ENCODE measurements at regions of chr13 and their contacts with region 1.

Region 1: DNA sequence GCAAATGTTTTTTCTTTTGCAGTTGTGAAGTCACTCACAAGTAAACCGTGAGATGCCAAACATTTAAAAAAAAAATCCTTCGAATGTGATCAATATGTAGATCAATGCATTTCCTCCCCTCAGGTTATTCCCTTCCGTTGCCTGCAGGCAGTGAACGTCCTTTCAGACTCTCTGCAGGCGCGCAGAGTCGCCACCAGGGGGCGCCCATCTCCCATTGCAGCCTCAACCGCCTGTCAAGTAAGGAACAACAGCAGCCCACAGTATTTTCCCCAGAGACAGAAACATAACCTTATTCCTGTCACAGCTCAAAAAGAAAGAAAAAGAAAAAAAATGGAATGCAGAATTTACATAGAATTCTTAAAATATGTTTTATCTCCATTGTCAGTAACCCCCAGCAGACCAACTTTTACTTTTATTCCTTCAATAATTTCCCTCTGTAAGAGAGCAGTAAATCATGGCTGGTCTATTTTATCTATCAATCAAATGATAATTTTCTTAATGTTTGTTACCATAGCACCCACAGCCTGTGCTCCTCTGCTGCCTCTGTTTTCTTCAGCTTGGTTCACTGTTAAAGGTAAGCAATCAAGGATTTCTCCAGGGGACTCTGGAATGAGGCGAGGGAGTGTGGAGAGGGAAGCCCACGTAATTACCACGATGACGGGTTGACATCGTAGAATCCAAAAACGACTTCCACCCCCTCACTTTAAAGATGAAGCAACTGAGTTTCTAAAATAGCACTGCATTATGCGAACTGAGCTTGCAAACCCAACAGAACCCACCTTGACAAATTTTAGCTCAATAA is 637.6 kb upstream of the ARGLU1 start:
- DNase-seq: peak; percentile 48 to 79 (median 73)
- ATAC-seq: peak; percentile 59 to 77
- H3K4me3 ChIP-seq: no peak overlapping the region
- H3K27ac ChIP-seq: peak overlapping the region; percentile 12
- H3K4me1 ChIP-seq: peaks cover 3% of the 10 kb centered on the region
- H3K27me3 ChIP-seq: no peaks in the 10 kb centered on the region

Region 2: DNA sequence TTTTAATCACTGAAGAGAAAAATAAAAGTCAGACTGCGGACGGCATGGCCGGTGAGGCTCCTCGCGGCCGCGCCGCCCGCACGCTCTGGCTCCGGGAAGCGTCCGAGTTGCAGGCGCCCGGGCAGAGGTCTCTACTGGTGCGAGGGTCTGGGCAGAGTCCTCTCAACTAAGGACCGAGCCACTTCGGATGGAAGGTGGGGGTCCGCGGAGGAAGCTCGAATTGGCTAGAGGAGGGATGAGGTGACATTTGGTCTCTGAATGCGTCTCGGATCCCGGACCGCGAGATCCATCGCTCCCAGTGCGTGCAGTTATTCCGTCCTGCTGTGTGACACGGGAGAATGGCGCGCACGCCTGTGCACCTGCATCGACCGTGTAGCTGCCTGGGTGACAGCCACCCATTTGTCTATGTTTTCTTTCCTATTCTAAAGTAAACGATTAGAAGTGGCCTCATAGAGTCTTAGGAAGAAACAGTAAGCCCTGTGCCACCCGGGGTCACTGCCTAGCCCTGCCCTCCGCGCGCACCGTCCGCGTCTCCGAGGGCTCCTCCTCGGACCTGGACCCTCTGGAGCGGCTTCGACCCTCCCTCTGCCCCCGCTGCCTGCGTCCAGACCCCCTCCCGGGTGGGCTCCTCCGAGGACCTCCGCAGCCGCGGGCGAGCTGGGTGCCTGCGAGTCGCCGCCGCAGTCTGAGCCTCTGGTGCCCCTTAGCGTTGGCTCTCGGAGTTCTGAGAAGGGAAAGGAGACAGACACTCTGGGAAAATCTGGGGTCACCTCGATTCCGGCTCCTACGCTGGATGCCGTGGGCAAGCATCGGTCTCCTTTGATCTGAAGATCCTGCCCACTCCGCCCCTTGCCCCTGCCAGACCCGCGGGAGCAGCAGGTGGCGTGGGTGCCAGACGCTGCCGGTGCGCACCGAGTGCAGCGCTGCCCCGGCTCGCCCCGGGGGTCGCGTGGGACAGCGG is 662.5 kb after region 1 on chr13:
- intact Hi-C with region 1: loop called in 1 of 4 experiments (anchors 5 kb)
- DNase-seq: peak in 2 of 3 donors; percentile 17 to 51
- ATAC-seq: peak; percentile 42 to 54
- H3K4me3 ChIP-seq: peak overlapping the region; percentile 64
- H3K27ac ChIP-seq: no peak overlapping the region
- H3K4me1 ChIP-seq: peaks cover 2% of the 10 kb centered on the region
- H3K27me3 ChIP-seq: peaks cover 2% of the 10 kb centered on the region

Region 3: GRCh38 chr13:108155185-108156106 is 949.9 kb after region 1 on chr13:
- intact Hi-C with region 1: loop called (anchors 5 to 10 kb)
- DNase-seq: peak; percentile 35 to 75 (median 65)
- ATAC-seq: no peak
- H3K4me3 ChIP-seq: no peak overlapping the region
- H3K27ac ChIP-seq: no peak overlapping the region
- H3K4me1 ChIP-seq: no peaks in the 10 kb centered on the region
- H3K27me3 ChIP-seq: no peaks in the 10 kb centered on the region

Measured in right cardiac atrium (tissue), 5 donors.